ENCODE measurements at regions of chr6 and their contacts with region 1.

Region 1: DNA sequence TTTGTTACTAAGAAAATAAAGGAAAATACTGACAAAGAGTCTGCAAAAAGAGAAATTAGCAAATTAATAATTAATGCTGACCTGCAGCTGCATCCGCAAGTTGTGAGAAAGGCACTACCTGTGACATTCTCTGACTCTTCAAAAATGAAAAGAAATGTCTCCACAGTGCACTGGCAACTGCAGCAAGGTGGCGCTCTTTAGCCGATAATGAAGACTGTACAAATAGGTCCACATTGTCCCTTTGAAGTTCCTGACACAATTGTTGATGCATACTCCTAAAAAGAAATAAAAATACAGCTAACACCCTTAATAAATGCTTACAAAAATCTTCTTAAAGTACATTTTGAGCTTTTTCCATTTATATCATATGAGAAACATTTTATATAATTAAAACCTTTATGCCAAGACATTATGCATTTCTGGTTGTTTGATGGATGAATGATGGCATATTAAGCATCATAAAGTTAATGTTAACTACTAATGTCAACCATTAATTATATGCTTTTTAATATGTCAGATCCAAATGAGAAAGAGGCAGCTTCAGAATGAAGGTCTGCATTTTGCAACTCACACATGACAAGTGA is 96.5 kb downstream of the MMS22L start:
- DNase-seq: peak; percentile 32
- CTCF ChIP-seq: peak; percentile 98

Region 2: DNA sequence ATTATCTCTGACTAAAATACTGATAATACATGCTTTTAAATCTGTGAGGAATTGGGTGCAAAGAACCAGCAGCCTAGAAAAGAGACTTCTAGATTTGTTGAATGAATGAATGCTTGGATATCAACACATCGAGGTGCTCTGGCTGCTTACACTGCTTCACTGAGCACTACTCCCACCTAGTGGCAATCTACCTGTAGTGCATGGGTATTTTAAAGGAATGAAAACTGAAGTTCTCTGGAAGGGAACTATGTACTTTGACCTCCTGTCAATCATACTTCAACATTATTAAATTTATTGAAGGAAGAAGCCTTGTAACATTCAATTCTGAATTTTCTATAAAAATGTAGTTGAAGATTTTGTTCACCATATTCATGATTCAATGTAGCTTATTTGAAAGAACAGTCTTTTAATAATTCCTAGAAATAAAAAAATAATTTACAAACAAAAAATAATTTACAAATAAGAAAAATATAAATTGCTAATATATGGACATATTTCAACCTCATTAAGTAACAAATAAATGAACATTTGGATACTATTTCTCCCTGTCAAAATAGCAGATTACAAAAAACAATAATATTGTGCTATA is 207.7 kb after region 1 on chr6:
- CTCF ChIA-PET with region 1: interaction called, 59 read pairs
- POLR2A ChIA-PET with region 1: no interaction called
- DNase-seq: peak; percentile 54
- CTCF ChIP-seq: peak; percentile 80

Region 3: GRCh38 chr6:97450087-97450486 is 263.6 kb after region 1 on chr6:
- CTCF ChIA-PET with region 1: no interaction called
- POLR2A ChIA-PET with region 1: no interaction called
- DNase-seq: no peak
- CTCF ChIP-seq: no peak

Region 4: DNA sequence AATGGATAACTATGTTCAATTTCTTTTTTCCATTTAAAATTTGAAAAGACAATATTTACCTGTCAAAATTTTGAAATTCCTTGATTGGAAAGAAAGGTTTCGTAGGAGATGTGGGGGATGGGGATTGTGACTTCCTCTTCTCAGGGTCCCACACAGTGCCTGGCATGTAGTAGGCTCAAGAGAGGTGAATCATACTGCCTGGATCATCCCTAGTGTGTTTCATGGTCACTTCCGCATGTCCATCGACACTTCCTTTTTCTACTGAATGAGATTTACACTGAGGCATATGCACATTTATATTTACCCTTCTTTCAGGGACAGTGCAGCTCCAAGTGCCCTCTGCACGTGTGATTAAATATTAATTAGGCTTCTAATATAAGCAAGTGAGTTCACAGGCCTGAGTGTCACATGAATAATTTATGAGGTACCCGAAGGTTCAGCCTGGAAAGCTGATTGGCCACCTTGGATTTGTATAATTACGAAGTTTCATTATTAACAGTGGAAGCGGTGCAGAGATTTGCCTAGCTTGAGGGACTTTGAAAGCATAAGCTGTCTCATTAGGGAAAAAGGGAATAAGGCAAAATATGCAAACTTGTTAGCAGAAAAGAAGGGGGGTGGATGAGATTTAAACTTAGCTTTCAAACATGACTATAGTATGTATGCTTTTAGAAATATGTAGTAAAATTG is 274.0 kb after region 1 on chr6:
- CTCF ChIA-PET with region 1: no interaction called
- POLR2A ChIA-PET with region 1: no interaction called
- DNase-seq: no peak
- CTCF ChIP-seq: no peak